CD4-positive, alpha-beta memory T cell (primary cell): ENCODE measurements at regions of chr17 and their contacts with region 1.

Region 1: GRCh38 chr17:75784473-75785015 is at the start of gene UNK:
- DNase-seq: peak; percentile 97 to 98 (median 98)
- H3K4me3 ChIP-seq: peak within 1 kb of the TSS; percentile 66 to 83
- H3K4me3 Mint-ChIP-seq: peak within 1 kb of the TSS; percentile 88 to 97 (median 94)
- H3K27ac ChIP-seq: peak within 1 kb of the TSS; percentile 100
- H3K27ac Mint-ChIP-seq: peak within 1 kb of the TSS; percentile 95 to 100 (median 99)
- H3K4me1 ChIP-seq: peaks cover 51% of the 10 kb centered on the region
- H3K4me1 Mint-ChIP-seq: peaks cover 26 to 53% (median 42%) of the 10 kb centered on the region in 4 donors
- H3K27me3 ChIP-seq: no peaks in the 10 kb centered on the region
- H3K27me3 Mint-ChIP-seq: peaks cover under 1 to 2% of the 10 kb centered on the region in 2 donors
- total RNA-seq, gene UNK: 45.8 to 48.1 TPM

Region 2: GRCh38 chr17:75707131-75707571 is 77.4 kb before region 1 on chr17:
- CTCF ChIA-PET with region 1: no interaction called
- POLR2A ChIA-PET with region 1: no interaction called
- intact Hi-C with region 1: no loop called
- DNase-seq: no peak
- H3K4me3 ChIP-seq: no peak overlapping the region
- H3K4me3 Mint-ChIP-seq: no peak overlapping the region
- H3K27ac ChIP-seq: no peak overlapping the region
- H3K27ac Mint-ChIP-seq: no peak overlapping the region
- H3K4me1 ChIP-seq: no peaks in the 10 kb centered on the region
- H3K4me1 Mint-ChIP-seq: no peaks in the 10 kb centered on the region
- H3K27me3 ChIP-seq: no peaks in the 10 kb centered on the region
- H3K27me3 Mint-ChIP-seq: no peaks in the 10 kb centered on the region

Region 3: GRCh38 chr17:75764711-75765421 is 19.7 kb before region 1 on chr17 and contains the start of gene GALK1:
- CTCF ChIA-PET with region 1: interaction called, 29 read pairs
- POLR2A ChIA-PET with region 1: interaction called, 259 read pairs
- intact Hi-C with region 1: loop called (anchors 1 kb)
- DNase-seq: peak; percentile 67 to 73 (median 72)
- H3K4me3 ChIP-seq: peak within 1 kb of the TSS; percentile 42 to 73
- H3K4me3 Mint-ChIP-seq: peak within 1 kb of the TSS; percentile 72 to 83 (median 78)
- H3K27ac ChIP-seq: peak within 1 kb of the TSS; percentile 58
- H3K27ac Mint-ChIP-seq: peak within 1 kb of the TSS; percentile 52 to 88 (median 72)
- H3K4me1 ChIP-seq: peaks cover 17% of the 10 kb centered on the region
- H3K4me1 Mint-ChIP-seq: peaks cover 6 to 26% (median 10%) of the 10 kb centered on the region in 4 donors
- H3K27me3 ChIP-seq: no peaks in the 10 kb centered on the region
- H3K27me3 Mint-ChIP-seq: no peaks in the 10 kb centered on the region
- total RNA-seq, gene GALK1: 25.7 to 25.9 TPM

Region 4: GRCh38 chr17:75827252-75828115 is 42.9 kb after region 1 on chr17:
- CTCF ChIA-PET with region 1: interaction called, 19 read pairs
- POLR2A ChIA-PET with region 1: interaction called, 556 read pairs
- intact Hi-C with region 1: loop called (anchors 1 kb)
- DNase-seq: peak; percentile 55 to 80 (median 71)
- H3K4me3 ChIP-seq: no peak overlapping the region
- H3K4me3 Mint-ChIP-seq: peak overlapping the region; percentile 17 to 73 (median 56)
- H3K27ac ChIP-seq: peak overlapping the region; percentile 59
- H3K27ac Mint-ChIP-seq: peak overlapping the region; percentile 66 to 91 (median 83)
- H3K4me1 ChIP-seq: peaks cover 26% of the 10 kb centered on the region
- H3K4me1 Mint-ChIP-seq: peaks cover 5 to 24% (median 14%) of the 10 kb centered on the region in 4 donors
- H3K27me3 ChIP-seq: no peaks in the 10 kb centered on the region
- H3K27me3 Mint-ChIP-seq: no peaks in the 10 kb centered on the region

Region 5: DNA sequence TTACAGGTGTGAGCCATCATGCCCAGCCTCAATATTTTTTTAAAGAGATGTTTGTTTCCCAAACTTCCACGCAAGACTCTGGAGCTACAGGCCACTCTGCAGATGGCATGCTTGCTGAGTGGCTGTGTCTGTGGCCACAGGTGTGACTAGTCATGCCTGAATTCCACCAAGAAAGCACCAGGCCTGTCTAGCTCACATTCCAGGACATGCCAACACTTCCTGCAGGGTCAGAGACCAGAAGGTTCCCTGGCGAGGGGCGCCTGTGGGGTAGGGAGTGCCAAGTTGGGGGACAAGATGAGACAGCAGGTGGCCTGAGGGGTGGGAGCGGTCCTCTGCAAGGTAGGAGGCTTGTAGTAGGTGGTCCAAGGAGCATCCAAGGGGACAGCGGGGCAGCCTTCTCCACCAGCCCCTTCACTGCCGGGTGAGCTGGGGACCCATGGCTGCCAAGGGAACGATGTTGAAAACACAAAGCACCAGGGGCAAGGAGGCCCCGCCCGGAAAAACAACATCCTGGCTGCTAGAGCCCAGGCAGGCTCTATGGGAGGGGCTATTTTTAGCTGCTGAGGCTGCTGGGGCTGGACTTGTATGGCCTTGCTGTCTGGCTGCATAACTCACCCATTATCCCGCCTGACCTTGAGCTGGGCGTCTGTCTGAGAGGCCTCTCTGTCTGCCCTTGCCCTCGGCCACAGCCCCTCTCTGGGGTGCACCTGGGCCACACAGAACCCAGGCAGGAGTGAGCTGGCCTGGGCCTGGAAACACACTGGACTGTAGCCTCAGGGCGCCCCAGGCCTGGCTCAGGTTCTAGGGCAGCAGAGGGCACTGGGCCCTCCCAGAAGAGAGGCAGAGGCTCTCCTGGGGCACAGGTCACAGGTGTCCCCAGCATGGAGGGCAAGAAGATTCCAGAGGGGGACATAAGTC is 88.1 kb after region 1 on chr17:
- CTCF ChIA-PET with region 1: interaction called, 10 read pairs
- POLR2A ChIA-PET with region 1: interaction called, 90 read pairs
- intact Hi-C with region 1: no loop called
- DNase-seq: peak; percentile 71 to 82 (median 79)
- H3K4me3 ChIP-seq: peak overlapping the region in 1 of 2 donors; percentile 16
- H3K4me3 Mint-ChIP-seq: peak overlapping the region in 7 of 8 donors; percentile 48 to 78 (median 73)
- H3K27ac ChIP-seq: peak overlapping the region; percentile 60
- H3K27ac Mint-ChIP-seq: peak overlapping the region; percentile 90 to 99 (median 97)
- H3K4me1 ChIP-seq: peaks cover 50% of the 10 kb centered on the region
- H3K4me1 Mint-ChIP-seq: peaks cover 27 to 54% (median 40%) of the 10 kb centered on the region in 4 donors
- H3K27me3 ChIP-seq: no peaks in the 10 kb centered on the region
- H3K27me3 Mint-ChIP-seq: no peaks in the 10 kb centered on the region

Region 6: DNA sequence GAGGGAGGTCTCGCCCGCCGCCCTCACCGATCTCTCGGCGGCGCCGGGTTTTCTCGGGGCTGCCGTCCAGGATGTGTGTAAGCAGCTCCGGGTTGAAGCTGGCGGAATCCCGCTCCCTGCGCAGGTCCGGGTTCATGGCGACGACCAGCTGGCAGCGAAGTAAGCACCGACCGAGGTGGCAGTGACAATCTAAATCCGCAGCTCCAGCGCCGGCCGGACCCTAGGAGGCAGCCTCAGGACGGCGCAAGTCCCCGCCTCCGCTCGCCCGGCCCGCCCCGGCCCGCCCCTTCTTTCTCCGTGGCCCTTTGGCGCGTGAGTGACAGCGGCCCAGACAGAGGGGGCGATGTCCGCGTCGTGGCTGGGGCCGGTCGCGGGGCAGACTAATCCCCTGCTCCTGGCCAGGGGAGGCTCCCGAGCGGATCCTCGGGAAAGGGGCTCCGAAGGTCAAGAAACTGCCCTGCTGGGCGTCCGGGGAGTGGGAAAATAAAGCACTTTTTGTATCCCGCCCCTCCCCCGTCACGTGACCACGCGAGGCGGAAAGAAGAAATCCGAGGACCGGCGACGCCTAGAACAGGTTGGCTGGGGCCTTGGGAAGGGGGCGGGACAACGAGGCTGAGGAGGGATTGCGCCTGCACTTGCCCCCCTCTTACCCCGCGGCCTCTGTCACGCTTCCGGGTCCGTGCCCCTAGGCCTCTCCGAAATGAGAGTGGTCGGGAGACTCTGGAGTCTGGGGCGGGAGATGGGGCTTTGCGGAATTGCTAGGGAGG is 194.6 kb after region 1 on chr17 and contains the starts of genes ACOX1 and TEN1:
- CTCF ChIA-PET with region 1: no interaction called
- POLR2A ChIA-PET with region 1: interaction called, 5 read pairs
- intact Hi-C with region 1: loop called (anchors 2 kb)
- DNase-seq: peak; percentile 93 to 97 (median 95)
- H3K4me3 ChIP-seq: peak within 1 kb of the TSS; percentile 61 to 88
- H3K4me3 Mint-ChIP-seq: peak within 1 kb of the TSS; percentile 93 to 99 (median 96)
- H3K27ac ChIP-seq: peak within 1 kb of the TSS; percentile 79
- H3K27ac Mint-ChIP-seq: peak within 1 kb of the TSS; percentile 99 to 100 (median 99)
- H3K4me1 ChIP-seq: peaks cover 30% of the 10 kb centered on the region
- H3K4me1 Mint-ChIP-seq: peaks cover 18 to 57% (median 34%) of the 10 kb centered on the region in 4 donors
- H3K27me3 ChIP-seq: no peaks in the 10 kb centered on the region
- H3K27me3 Mint-ChIP-seq: no peaks in the 10 kb centered on the region
- total RNA-seq, gene ACOX1: 30.4 to 31.7 TPM
- total RNA-seq, gene TEN1: 10.2 to 16.1 TPM